Activated naive CD4-positive, alpha-beta T cell treated with anti-CD3 and anti-CD28 coated beads for 36 hours (primary cell): ENCODE measurements at regions of chr14 and their contacts with region 1.

Region 1: GRCh38 chr14:70816525-70816924 is 7.2 kb upstream of the MAP3K9 start:
- DNase-seq: no peak
- H3K4me3 Mint-ChIP-seq: no peak overlapping the region
- H3K27ac Mint-ChIP-seq: no peak overlapping the region
- H3K4me1 Mint-ChIP-seq: peaks cover 15% of the 10 kb centered on the region
- H3K27me3 Mint-ChIP-seq: peaks cover 16% of the 10 kb centered on the region

Region 2: DNA sequence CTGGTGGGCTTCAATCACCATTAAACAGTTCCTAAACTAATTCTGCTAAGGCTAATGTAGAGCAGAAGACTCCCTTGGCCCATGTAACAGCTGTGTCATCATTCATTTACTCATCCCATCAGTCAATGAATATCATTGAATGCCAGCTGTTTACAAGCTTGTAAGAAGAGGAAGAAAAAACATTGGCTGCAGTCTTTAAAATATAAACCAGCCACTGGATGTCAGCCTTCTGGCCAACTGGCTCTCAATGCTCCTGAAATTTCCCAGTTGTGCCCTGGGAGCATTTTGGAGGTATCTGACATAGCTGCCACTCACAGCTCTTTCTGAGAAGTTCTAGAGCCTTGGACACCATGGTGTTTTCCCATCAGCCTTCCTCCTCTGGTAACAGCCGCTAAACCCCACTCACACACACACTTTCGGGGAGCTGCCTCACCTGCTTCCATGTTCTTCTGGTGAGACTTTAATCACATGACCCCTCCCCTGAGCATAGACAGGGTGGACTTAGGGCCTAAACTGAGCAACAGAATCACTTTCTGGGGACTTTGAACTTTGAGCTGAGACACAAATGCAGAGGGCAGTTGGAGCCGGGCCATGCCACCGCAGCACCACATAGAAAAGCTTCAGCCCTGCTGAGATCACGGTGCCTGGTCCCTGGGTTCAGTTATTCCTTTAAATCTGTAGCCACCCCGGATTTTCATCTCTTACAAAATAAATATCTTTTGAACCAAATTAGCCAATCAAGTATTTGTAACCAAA is 11.0 kb after region 1 on chr14:
- CTCF ChIA-PET with region 1: interaction called, 19 read pairs
- intact Hi-C with region 1: no loop called
- DNase-seq: no peak
- H3K4me3 Mint-ChIP-seq: no peak overlapping the region
- H3K27ac Mint-ChIP-seq: no peak overlapping the region
- H3K4me1 Mint-ChIP-seq: peaks cover 5% of the 10 kb centered on the region
- H3K27me3 Mint-ChIP-seq: peaks cover 8% of the 10 kb centered on the region

Region 3: GRCh38 chr14:70955543-70956480 is 139.3 kb after region 1 on chr14:
- CTCF ChIA-PET with region 1: interaction called, 54 read pairs
- intact Hi-C with region 1: loop called (anchors 1 kb)
- DNase-seq: peak; percentile 58
- H3K4me3 Mint-ChIP-seq: no peak overlapping the region
- H3K27ac Mint-ChIP-seq: no peak overlapping the region
- H3K4me1 Mint-ChIP-seq: peaks cover 33% of the 10 kb centered on the region
- H3K27me3 Mint-ChIP-seq: no peaks in the 10 kb centered on the region

Region 4: DNA sequence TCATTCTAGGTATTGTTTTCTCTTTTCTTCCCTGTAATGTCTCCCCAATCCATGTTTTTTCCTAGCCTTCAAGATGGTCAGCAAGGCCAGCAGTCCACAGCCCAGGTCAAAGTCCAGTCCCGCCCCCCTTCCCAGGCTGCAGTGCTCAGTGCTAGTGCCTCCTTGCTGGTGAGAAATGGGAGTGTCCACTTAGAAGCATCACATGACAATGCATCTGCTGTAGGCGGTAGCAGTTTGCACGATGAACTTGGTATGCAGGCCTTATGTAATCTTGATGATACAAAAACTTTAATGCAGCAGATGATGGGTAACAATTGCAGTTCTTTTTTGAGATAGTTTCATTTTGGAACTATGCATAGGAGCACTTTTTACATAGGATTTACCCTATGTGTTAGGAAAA is 179.2 kb after region 1 on chr14:
- CTCF ChIA-PET with region 1: no interaction called
- intact Hi-C with region 1: no loop called
- DNase-seq: no peak
- H3K4me3 Mint-ChIP-seq: no peak overlapping the region
- H3K27ac Mint-ChIP-seq: no peak overlapping the region
- H3K4me1 Mint-ChIP-seq: peaks cover 49% of the 10 kb centered on the region
- H3K27me3 Mint-ChIP-seq: no peaks in the 10 kb centered on the region